Endothelial cell of umbilical vein (primary cell): ENCODE measurements at regions of chrX and their contacts with region 1.

Region 1: DNA sequence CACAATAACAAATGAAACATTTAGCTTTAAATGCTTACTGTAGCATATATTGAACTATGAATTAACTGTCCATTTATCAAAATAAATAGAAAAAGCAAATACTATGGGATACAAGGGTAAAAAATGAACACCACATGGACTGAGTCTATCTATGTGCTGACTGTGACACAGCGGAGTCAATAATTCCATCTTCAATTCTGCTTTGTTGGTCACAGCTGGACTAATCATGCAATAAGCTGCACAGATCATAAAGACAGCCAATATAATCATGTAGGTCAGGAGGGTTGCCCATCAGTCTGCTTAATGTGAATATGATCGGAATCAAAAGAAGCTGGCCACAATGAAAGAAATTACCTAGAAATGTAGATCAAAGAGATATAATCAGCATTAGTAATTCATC is 95.7 kb upstream of the FAM47A start:
- DNase-seq: no peak
- H3K4me3 ChIP-seq: no peak overlapping the region
- H3K27ac ChIP-seq: no peak overlapping the region
- H3K4me1 ChIP-seq: no peaks in the 10 kb centered on the region
- H3K27me3 ChIP-seq: no peaks in the 10 kb centered on the region
- CTCF ChIP-seq: no peak
- POLR2A ChIP-seq: no peak

Region 2: DNA sequence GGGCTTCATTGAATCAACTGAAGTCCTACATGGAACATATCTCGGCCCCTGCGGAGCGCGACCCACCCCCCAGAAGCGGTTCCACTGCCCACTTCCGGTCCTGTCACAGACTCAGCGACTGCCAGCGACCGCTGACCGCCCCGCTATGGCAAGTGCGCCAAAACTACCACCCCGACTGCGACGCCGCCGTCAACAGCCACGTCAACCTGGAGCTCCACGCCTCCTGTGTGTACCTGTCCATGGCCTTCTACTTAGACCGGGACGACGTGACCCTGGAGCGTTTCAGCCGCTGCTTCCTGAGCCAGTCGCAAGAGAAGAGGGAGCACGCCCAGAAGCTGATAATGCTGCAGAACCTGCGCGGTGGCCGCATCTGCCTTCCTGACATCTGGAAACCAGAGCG is 80.9 kb before region 1 on chrX:
- CTCF ChIA-PET with region 1: no interaction called
- POLR2A ChIA-PET with region 1: no interaction called
- dilution Hi-C with region 1: no loop called
- intact Hi-C with region 1: no loop called
- DNase-seq: no peak
- H3K4me3 ChIP-seq: no peak overlapping the region
- H3K27ac ChIP-seq: no peak overlapping the region
- H3K4me1 ChIP-seq: no peaks in the 10 kb centered on the region
- H3K27me3 ChIP-seq: no peaks in the 10 kb centered on the region
- CTCF ChIP-seq: no peak
- POLR2A ChIP-seq: no peak

Region 3: GRCh38 chrX:34288782-34289181 is 61.0 kb after region 1 on chrX:
- CTCF ChIA-PET with region 1: no interaction called
- POLR2A ChIA-PET with region 1: no interaction called
- dilution Hi-C with region 1: no loop called
- intact Hi-C with region 1: loop called (anchors 10 kb)
- DNase-seq: peak; percentile 85
- H3K4me3 ChIP-seq: no peak overlapping the region
- H3K27ac ChIP-seq: peak overlapping the region; percentile 48
- H3K4me1 ChIP-seq: peaks cover 12% of the 10 kb centered on the region
- H3K27me3 ChIP-seq: no peaks in the 10 kb centered on the region
- CTCF ChIP-seq: no peak
- POLR2A ChIP-seq: no peak

Region 4: DNA sequence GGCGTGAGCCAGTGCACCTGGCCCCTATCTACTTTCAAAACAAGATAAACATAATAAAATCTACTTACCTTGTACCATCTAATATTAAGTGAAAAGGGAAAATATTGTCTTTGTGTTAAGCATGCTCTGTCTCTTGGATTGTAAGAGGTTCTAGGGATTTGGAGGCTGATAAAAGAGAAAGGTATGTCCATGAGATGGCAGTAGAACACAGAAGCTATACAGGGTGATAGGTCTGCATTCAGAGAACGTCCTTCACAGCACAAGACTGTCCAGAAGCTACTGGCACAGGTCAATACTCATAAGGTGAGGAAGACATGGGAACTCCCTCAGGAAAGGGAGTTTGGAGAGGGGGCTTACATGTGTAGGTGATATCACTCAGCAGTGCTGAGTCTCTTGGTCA is 293.8 kb after region 1 on chrX:
- CTCF ChIA-PET with region 1: no interaction called
- POLR2A ChIA-PET with region 1: no interaction called
- dilution Hi-C with region 1: no loop called
- intact Hi-C with region 1: no loop called
- DNase-seq: peak; percentile 51
- H3K4me3 ChIP-seq: no peak overlapping the region
- H3K27ac ChIP-seq: no peak overlapping the region
- H3K4me1 ChIP-seq: no peaks in the 10 kb centered on the region
- H3K27me3 ChIP-seq: no peaks in the 10 kb centered on the region
- CTCF ChIP-seq: peak in 1 of 2 donors; percentile 8
- POLR2A ChIP-seq: no peak